Activated CD8-positive, alpha-beta memory T cell treated with anti-CD3 and anti-CD28 coated beads, Interleukin-2, amount 10 ng/mL, durations not matched to agents 7 days and 5 days (primary cell): ENCODE measurements at regions of chr12 and their contacts with region 1.

Region 1: DNA sequence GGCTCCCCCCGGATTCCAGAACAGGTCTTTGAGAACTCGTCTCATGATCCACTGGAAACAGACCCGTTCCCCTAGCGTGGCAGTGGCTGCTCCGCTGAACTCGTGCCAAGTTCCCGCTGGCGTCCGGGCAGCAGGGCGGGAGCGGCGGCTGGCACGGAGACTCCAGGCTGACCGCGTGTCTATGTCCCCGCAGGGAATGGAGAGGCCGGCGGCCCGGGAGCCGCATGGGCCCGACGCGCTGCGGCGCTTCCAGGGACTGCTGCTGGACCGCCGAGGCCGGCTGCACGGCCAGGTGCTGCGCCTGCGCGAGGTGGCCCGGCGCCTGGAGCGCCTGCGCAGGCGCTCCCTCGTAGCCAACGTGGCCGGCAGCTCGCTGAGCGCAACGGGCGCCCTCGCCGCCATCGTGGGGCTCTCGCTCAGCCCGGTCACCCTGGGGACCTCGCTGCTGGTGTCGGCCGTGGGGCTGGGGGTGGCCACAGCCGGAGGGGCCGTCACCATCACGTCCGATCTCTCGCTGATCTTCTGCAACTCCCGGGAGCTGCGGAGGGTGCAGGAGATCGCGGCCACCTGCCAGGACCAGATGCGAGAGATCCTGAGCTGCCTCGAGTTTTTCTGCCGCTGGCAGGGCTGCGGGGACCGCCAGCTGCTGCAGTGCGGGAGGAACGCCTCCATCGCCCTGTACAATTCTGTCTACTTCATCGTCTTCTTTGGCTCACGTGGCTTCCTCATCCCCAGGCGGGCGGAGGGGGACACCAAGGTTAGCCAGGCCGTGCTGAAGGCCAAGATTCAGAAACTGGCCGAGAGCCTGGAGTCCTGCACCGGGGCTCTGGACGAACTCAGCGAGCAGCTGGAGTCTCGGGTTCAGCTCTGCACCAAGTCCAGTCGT is 1.5 kb downstream of the APOLD1 start:
- DNase-seq: peak; percentile 76
- ATAC-seq: peak; percentile 96
- H3K4me3 Mint-ChIP-seq: peak overlapping the region; percentile 78
- H3K27ac Mint-ChIP-seq: peak overlapping the region; percentile 75
- H3K4me1 Mint-ChIP-seq: peaks cover 42% of the 10 kb centered on the region
- H3K27me3 Mint-ChIP-seq: no peaks in the 10 kb centered on the region

Region 2: DNA sequence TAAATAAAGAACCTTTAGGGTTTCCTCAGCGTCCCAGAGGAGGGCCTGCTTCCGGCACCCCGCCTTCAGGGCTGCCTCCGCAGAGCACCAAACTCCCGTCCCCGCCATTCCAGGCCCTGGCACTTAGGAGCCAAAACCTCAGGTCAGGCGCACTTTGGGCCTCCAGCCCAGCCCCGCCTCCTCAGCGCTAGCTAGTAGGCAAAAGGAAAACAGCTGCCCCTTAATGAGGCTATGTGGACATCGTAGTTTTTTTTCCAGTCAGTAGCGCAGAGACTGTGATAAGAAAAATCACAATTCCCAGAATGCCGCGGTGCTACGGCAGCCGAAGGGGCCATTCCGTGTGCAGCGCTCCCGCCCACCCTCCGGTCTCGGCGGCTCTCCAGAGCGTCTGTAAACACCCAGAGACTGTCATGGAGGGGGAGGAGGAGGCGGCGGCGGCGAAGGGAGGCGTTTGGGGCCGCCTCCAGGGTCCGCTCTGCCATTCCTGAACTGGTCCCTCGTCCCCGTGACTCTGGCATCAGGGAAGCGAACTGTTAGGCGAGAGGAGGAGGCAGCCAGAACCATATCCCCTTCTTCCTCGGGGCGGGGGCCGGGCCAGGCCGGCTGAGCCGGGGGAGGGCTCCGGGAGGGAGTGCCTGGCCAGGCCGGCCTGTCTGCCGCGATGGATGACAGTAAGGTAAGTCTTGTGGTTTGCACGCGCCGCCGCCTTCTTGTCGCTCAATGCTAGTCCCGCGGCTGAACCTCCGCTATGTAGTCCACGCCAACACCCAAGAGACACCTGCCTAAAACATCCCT is 175.2 kb before region 1 on chr12 and contains the start of gene CREBL2:
- CTCF ChIA-PET with region 1: no interaction called
- DNase-seq: peak; percentile 89
- ATAC-seq: peak; percentile 89
- H3K4me3 Mint-ChIP-seq: peak within 1 kb of the TSS; percentile 82
- H3K27ac Mint-ChIP-seq: peak within 1 kb of the TSS; percentile 95
- H3K4me1 Mint-ChIP-seq: peaks cover 55% of the 10 kb centered on the region
- H3K27me3 Mint-ChIP-seq: no peaks in the 10 kb centered on the region
- total RNA-seq, gene CREBL2: 16.3 to 20.5 TPM

Region 3: GRCh38 chr12:12696562-12697383 is 90.2 kb before region 1 on chr12:
- CTCF ChIA-PET with region 1: no interaction called
- DNase-seq: peak; percentile 96
- ATAC-seq: peak; percentile 84
- H3K4me3 Mint-ChIP-seq: peak overlapping the region; percentile 81
- H3K27ac Mint-ChIP-seq: peak overlapping the region; percentile 100
- H3K4me1 Mint-ChIP-seq: peaks cover 60% of the 10 kb centered on the region
- H3K27me3 Mint-ChIP-seq: no peaks in the 10 kb centered on the region

Region 4: GRCh38 chr12:12803186-12803585 is 16.2 kb after region 1 on chr12:
- CTCF ChIA-PET with region 1: interaction called, 34 read pairs
- DNase-seq: peak; percentile 81
- ATAC-seq: peak; percentile 87
- H3K4me3 Mint-ChIP-seq: peak overlapping the region; percentile 2
- H3K27ac Mint-ChIP-seq: peak overlapping the region; percentile 74
- H3K4me1 Mint-ChIP-seq: peaks cover 50% of the 10 kb centered on the region
- H3K27me3 Mint-ChIP-seq: no peaks in the 10 kb centered on the region

Region 5: DNA sequence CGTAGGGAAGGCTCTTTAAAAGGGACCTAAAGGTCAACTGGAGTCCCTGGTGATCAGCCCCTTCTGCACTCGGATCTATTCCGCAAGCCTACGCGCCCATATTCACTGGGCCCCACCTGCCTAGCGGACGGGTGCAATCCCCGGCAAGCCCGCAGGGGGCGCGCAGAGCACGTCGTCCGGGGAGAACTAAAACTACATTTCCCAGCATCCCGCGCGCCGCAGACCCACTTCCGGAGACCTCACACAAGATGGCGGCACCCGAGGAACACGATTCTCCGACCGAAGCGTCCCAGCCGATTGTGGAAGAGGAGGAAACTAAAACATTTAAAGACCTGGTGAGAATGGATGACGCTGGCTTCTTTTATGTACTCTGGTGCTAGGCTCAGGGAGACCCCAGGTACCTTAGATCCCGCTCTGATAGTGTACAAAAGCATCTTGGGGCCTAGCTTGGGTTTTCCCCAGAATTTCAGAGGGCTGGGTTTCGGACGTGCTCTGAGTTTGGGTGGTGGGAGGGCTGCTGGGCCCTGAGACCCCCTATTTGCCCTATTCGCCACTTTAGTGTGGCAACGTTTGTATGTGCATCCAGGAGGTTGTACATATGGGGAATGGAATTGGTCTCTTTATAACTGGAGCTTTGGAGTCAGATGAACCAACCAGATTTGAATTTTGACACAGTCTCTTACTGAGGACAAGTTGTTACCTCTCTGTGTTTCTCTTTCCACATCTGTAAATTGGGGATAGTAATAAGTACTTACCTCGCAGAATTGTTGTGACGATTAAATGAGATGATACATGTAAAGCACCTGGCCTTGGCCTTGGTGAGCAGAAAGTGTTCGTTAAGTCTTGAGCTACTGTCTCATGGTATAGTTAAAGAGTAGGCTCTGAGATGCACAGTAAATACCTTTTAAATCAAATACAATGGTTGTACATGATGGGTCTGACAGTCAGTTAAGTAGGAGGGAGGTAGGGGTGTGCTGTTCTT is 26.5 kb after region 1 on chr12 and contains the start of gene DDX47:
- CTCF ChIA-PET with region 1: interaction called, 55 read pairs
- DNase-seq: peak; percentile 97
- ATAC-seq: peak; percentile 89
- H3K4me3 Mint-ChIP-seq: peak within 1 kb of the TSS; percentile 91
- H3K27ac Mint-ChIP-seq: peak within 1 kb of the TSS; percentile 86
- H3K4me1 Mint-ChIP-seq: peaks cover 78% of the 10 kb centered on the region
- H3K27me3 Mint-ChIP-seq: no peaks in the 10 kb centered on the region
- total RNA-seq, gene DDX47: 56.0 to 68.0 TPM

Region 6: DNA sequence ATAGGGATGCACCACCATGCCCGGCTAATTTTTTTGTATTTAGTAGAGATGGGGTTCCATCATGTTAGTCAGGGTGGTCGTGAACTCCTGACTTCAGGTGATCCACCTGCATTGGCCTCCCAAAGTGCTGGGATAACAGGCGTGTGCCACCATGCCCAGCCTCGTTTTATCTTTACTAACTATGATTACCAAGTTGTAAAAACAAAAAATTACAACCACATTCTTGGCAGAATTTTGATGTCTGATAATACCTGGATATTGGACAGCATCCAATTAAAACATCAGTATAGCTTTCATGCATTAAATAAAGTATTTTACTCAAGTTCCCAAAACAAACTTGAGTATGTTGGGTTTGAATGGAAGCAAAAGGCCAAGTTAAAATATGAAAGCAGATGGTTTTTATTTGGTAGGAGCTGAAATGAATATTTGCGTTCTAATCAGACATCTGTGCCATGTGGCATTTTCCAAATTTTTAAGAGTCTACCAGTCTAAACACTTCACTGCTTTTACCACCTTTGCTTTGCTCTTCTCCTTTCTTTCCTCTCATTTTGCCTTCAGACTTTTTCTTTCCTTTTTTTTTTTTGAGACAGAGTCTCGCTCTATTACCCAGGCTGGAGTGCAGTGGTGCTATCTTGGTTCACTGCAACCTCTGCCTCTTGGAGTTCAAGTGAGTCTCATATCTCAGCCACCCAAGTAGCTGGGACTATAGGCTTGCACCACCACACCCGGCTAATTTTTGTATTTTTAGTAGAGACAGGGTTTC is 58.2 kb after region 1 on chr12:
- CTCF ChIA-PET with region 1: no interaction called
- DNase-seq: no peak
- ATAC-seq: no peak
- H3K4me3 Mint-ChIP-seq: no peak overlapping the region
- H3K27ac Mint-ChIP-seq: no peak overlapping the region
- H3K4me1 Mint-ChIP-seq: peaks cover 14% of the 10 kb centered on the region
- H3K27me3 Mint-ChIP-seq: no peaks in the 10 kb centered on the region

Region 7: DNA sequence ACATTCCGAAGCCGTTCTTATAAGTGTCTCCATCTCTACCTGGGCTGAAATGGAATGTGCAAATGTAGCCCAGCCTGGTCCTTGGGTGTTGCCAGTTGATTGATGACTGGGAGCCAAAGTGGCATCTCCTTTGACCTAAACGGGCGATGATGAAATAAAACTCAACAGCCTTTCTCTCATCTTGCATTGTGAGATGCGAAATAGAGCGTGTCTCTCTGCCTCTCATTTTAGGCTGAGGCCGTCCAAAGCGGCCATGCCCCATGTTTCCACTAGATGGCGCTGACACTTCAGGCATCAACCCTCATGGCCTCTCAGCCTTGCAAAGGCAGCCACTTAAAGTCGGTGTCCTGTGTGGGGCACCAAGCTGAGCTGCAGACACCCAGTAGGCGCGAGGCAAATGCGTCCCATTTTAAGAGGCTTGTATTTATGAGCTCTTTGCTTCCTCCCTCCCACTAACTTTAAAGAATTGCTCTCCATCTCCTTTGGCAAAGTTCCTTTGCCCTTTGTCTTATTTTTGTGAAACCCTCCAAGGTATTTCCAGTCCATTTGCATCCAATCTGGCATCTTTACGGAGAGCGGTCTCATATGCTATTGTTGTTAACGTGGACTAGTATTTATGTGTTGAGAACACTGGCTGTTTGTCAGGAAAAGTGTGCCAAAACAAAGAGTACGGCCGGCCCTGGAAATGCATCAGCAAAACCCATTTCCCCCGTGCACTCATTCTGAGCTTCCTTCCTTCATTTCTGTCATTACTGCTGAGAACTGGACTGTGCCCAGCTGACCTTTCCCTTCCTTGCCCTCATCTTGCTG is 129.4 kb after region 1 on chr12:
- CTCF ChIA-PET with region 1: interaction called, 12 read pairs
- DNase-seq: peak; percentile 91
- ATAC-seq: peak; percentile 99
- H3K4me3 Mint-ChIP-seq: no peak overlapping the region
- H3K27ac Mint-ChIP-seq: no peak overlapping the region
- H3K4me1 Mint-ChIP-seq: peaks cover 10% of the 10 kb centered on the region
- H3K27me3 Mint-ChIP-seq: peaks cover 35% of the 10 kb centered on the region